ENCODE measurements at regions of chr1 and their contacts with region 1.

Region 1: DNA sequence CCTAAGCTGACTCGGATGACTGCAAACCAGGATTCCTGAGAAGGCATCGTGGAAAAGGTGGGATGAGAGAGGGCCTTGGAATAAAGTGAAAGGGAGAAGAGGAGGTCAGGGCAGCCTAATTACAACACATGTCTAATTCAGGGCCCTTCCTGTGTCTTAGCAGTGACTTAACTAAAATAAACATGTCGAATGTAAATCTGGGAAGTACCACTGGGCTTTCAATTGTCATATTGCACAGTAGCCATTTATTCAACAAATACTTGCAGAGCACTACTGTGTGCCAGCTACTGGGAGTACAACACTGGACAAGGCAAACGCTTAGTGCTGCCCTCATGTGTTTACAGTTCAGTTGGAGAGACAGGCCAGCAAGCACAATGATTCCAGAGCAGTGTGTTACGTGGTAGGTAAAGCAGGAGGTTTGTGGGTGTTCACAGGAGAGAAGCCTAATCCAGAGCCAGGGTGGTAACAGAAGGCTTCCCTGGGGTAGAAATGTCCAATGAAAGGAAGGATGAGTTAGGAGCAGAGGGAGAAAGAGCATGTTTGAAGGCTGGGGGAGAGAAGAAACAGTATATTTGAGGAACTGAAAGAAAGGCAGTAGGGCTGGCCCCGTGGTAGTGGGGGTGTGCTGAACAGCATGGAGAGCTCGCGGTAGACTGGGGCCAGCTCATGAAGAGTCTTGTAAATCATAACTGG is 38.0 kb upstream of the RASAL2 start:
- DNase-seq: peak in 2 of 5 donors; percentile 42 to 61
- ATAC-seq: peak; percentile 38 to 65 (median 62)
- H3K4me3 ChIP-seq: no peak overlapping the region
- H3K27ac ChIP-seq: peak overlapping the region; percentile 77 to 96 (median 84)
- H3K4me1 ChIP-seq: peaks cover 19 to 88% (median 64%) of the 10 kb centered on the region in 12 donors
- H3K27me3 ChIP-seq: no peaks in the 10 kb centered on the region
- CTCF ChIP-seq: peak in 10 of 12 donors; percentile 5 to 52 (median 25)
- POLR2A ChIP-seq: no peak

Region 2: DNA sequence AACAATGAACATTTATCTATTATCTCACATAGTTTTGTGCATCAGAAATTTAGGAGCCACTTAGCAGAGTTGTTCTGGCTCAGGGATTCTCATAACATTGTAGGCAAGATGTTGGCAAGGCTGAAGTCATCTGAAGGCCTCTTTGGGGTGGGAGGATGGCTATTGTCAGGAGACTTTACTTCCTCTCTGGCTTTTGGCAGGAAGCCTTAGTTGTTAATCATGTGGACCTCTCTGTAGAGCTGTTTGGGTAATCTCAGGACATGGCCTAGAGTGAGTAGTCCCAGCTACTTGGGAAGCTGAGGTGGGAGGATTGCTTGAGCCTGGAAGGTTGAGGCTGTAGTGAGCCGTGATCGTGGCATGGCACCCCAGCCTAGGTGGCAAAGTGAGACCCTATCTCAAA is 78.1 kb after region 1 on chr1:
- intact Hi-C with region 1: loop called in 1 of 10 experiments (anchors 10 kb)
- DNase-seq: peak in 3 of 5 donors; percentile 36 to 64 (median 56)
- ATAC-seq: peak; percentile 50 to 97 (median 94)
- H3K4me3 ChIP-seq: no peak overlapping the region
- H3K27ac ChIP-seq: peak overlapping the region in 8 of 12 donors; percentile 9 to 80 (median 45)
- H3K4me1 ChIP-seq: peaks cover 3 to 50% (median 31%) of the 10 kb centered on the region in 12 donors
- H3K27me3 ChIP-seq: no peaks in the 10 kb centered on the region
- CTCF ChIP-seq: no peak
- POLR2A ChIP-seq: no peak

Region 3: GRCh38 chr1:178172954-178173353 is 117.0 kb after region 1 on chr1:
- intact Hi-C with region 1: loop called in 1 of 10 experiments (anchors 10 kb)
- DNase-seq: no peak
- ATAC-seq: no peak
- H3K4me3 ChIP-seq: no peak overlapping the region
- H3K27ac ChIP-seq: no peak overlapping the region
- H3K4me1 ChIP-seq: peaks cover 0 to 58% (median 26%) of the 10 kb centered on the region in 12 donors
- H3K27me3 ChIP-seq: no peaks in the 10 kb centered on the region
- CTCF ChIP-seq: no peak
- POLR2A ChIP-seq: no peak